B cell (primary cell): ENCODE measurements at regions of chr21 and their contacts with region 1.

Region 1: DNA sequence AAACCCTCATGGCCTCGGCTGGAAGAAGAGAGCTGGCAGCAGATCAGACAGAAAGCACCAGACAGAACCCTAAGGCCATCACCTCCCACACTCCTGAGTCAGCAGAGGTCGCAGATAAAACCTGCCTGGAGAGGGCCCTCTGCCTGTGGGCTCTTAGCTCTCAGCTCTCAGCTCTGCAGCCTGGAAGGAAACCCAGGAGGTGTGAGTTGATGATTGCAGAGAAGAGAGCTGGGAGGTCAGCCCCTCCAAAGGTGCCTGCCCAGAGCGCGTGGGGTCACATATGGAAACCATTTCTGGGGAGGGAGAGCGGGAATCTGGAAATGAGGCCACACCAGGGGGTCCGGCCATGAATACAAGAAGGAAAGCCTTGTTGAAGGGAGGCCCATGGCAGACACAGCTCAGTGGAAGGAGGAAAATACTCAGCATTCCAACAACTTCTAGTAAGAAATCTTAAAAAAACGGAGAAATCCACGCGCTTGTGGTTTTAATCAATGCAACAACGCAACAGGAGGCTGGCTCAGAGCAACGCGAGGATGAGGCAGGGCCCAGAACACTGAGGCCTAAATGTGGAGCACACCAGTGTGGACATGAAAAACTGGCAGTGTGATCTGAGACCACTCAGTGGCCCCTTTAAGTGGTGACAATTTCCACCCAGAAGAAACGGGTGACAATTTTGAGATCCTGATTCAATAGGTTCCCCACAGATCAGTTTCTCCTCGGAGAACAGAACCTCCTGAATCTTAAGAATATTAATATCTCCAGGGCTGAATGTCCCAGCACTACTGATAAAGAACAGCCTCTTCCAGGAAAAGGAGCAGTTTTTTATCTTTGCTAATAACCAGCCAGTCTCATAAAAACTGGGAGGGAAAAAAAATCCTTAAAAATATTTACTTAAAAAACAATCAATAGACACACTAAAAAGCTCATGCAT is 45.7 kb downstream of the PSMG1 start:
- DNase-seq: no peak
- ATAC-seq: no peak
- H3K4me3 ChIP-seq: no peak overlapping the region
- H3K4me3 Mint-ChIP-seq: no peak overlapping the region
- H3K27ac ChIP-seq: no peak overlapping the region
- H3K27ac Mint-ChIP-seq: no peak overlapping the region
- H3K4me1 ChIP-seq: no peaks in the 10 kb centered on the region
- H3K4me1 Mint-ChIP-seq: no peaks in the 10 kb centered on the region
- H3K27me3 ChIP-seq: no peaks in the 10 kb centered on the region
- H3K27me3 Mint-ChIP-seq: peaks cover 7% of the 10 kb centered on the region
- CTCF ChIP-seq: no peak

Region 2: DNA sequence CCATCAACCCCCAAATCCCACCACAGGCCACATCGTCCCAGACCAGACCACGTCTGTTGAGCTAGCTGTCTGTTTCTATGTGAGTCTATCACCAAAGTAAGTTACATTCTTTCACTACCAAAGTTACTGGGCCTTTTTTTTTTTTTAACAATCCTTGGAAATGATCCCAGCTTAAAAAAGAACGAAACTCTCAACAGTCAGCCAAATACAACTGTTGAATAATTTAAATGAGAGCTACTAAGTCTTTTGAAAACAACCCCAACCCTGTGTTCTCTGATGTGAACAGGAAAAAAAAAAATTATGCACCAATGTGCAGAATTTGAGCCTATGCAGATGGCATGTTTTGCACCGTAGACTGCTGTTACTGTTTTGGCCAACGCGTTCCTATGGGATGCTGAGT is 465.7 kb before region 1 on chr21:
- CTCF ChIA-PET with region 1: interaction called, 4 read pairs
- POLR2A ChIA-PET with region 1: no interaction called
- intact Hi-C with region 1: loop called (anchors 5 kb)
- DNase-seq: no peak
- ATAC-seq: no peak
- H3K4me3 ChIP-seq: no peak overlapping the region
- H3K4me3 Mint-ChIP-seq: no peak overlapping the region
- H3K27ac ChIP-seq: no peak overlapping the region
- H3K27ac Mint-ChIP-seq: no peak overlapping the region
- H3K4me1 ChIP-seq: no peaks in the 10 kb centered on the region
- H3K4me1 Mint-ChIP-seq: no peaks in the 10 kb centered on the region
- H3K27me3 ChIP-seq: no peaks in the 10 kb centered on the region
- H3K27me3 Mint-ChIP-seq: peaks cover 5% of the 10 kb centered on the region
- CTCF ChIP-seq: no peak

Region 3: GRCh38 chr21:39336457-39337030 is 199.0 kb after region 1 on chr21:
- CTCF ChIA-PET with region 1: no interaction called
- POLR2A ChIA-PET with region 1: no interaction called
- intact Hi-C with region 1: no loop called
- DNase-seq: no peak
- ATAC-seq: no peak
- H3K4me3 ChIP-seq: no peak overlapping the region
- H3K4me3 Mint-ChIP-seq: no peak overlapping the region
- H3K27ac ChIP-seq: no peak overlapping the region
- H3K27ac Mint-ChIP-seq: no peak overlapping the region
- H3K4me1 ChIP-seq: no peaks in the 10 kb centered on the region
- H3K4me1 Mint-ChIP-seq: no peaks in the 10 kb centered on the region
- H3K27me3 ChIP-seq: no peaks in the 10 kb centered on the region
- H3K27me3 Mint-ChIP-seq: no peaks in the 10 kb centered on the region
- CTCF ChIP-seq: no peak

Region 4: DNA sequence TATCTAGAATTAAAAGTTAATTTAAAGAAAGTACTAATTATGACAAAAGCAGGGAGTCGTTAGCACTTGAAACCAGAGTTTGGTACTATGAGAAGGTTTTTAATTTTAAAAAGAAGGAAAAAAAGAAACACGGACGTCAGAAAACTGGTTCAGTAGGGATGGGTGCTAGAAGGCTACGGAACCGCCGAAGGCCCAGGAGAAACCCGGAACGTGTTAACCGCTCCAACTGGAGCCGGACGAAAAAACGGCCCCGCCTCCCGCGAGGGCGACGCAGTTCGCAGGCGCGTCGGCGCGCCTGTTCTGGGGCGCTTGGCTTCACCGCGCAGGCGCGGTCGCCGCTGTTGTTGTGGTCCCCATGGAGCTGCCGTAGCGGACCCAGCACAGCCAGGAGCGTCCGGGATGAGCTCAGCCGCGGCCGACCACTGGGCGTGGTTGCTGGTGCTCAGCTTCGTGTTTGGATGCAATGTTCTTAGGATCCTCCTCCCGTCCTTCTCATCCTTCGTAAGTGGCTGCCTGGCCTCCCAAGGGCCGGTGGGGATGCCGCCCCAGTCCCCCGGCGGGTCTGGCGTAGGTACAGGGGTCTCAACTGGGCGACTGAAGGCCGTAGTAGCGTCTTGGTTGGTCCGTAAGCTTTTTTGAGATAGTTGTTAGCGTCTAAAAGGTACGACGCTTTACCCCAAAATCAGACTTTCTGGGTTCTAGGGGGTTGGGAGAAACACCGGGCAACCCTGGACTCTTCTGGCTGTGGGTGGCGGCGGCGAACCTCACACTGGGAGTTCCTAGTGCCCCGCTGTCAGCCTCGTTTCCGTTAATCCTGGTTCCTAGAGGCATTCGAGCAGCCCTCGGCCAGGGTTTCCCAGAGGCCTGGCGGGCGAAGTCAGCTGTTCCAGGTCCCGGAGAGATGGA is 242.7 kb after region 1 on chr21:
- CTCF ChIA-PET with region 1: no interaction called
- POLR2A ChIA-PET with region 1: no interaction called
- intact Hi-C with region 1: no loop called
- DNase-seq: peak; percentile 90
- ATAC-seq: peak; percentile 98
- H3K4me3 ChIP-seq: peak overlapping the region; percentile 73 to 97 (median 92)
- H3K4me3 Mint-ChIP-seq: peak overlapping the region; percentile 93
- H3K27ac ChIP-seq: peak overlapping the region; percentile 61 to 81
- H3K27ac Mint-ChIP-seq: peak overlapping the region; percentile 90
- H3K4me1 ChIP-seq: peaks cover 10 to 16% of the 10 kb centered on the region in 2 donors
- H3K4me1 Mint-ChIP-seq: peaks cover 19% of the 10 kb centered on the region
- H3K27me3 ChIP-seq: peaks cover 0 to 6% (median 0%) of the 10 kb centered on the region in 4 experiments
- H3K27me3 Mint-ChIP-seq: no peaks in the 10 kb centered on the region
- CTCF ChIP-seq: no peak